ENCODE measurements at regions of chr18 and their contacts with region 1.

Region 1: DNA sequence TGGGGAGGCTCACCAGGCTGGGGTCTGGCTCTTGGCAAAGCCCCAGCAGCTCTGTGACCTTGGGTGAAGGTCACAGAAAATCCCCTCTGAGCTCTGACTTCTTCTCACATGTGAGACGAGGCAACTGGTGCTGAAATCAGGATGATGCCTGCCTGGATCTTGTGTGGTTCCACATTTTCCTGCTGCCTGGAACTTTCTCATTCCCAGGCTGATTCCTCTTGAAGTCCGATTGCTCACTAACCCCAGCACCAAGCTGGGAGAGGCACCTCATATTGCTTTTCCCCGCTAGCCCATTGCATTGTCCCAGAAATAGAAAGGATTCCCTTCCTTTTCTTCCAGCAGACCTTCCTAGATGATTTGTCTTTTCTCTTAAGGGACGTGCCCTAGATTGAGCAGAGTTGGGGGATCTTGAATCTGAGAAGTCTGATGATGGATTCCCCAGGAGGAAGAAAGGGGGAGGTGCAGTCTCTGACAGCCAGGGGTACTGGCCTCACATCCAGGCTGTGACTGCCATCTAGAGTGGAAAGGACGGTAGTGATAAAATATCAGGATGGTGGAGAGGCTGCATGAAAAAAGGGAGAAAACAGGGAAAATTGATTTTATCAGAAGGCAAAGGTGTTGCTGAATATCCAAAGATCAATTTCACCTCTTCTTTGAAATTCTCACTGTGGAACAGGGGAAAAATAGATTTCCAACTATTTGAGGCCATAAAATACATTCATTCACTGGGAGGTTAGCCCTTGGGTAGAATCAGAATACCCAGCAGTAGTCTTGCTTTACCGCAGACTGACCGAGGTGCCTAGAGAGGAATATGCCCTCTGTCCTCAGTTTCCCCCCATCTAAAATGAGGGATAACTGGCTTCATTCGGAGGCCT is 96.3 kb downstream of the FAM210A start:
- DNase-seq: no peak
- ATAC-seq: peak; percentile 95
- H3K4me3 Mint-ChIP-seq: peak overlapping the region; percentile 17
- H3K27ac Mint-ChIP-seq: peak overlapping the region; percentile 63
- H3K4me1 Mint-ChIP-seq: peaks cover 24% of the 10 kb centered on the region
- H3K27me3 Mint-ChIP-seq: no peaks in the 10 kb centered on the region
- CTCF ChIP-seq: peak; percentile 68

Region 2: GRCh38 chr18:13539050-13539449 is 91.0 kb before region 1 on chr18:
- CTCF ChIA-PET with region 1: interaction called, 11 read pairs
- POLR2A ChIA-PET with region 1: no interaction called
- intact Hi-C with region 1: no loop called
- DNase-seq: no peak
- ATAC-seq: peak; percentile 81
- H3K4me3 Mint-ChIP-seq: peak overlapping the region; percentile 75
- H3K27ac Mint-ChIP-seq: peak overlapping the region; percentile 85
- H3K4me1 Mint-ChIP-seq: peaks cover 44% of the 10 kb centered on the region
- H3K27me3 Mint-ChIP-seq: no peaks in the 10 kb centered on the region
- CTCF ChIP-seq: no peak

Region 3: GRCh38 chr18:13577091-13577697 is 52.9 kb before region 1 on chr18:
- CTCF ChIA-PET with region 1: interaction called, 10 read pairs
- POLR2A ChIA-PET with region 1: interaction called, 6 read pairs
- intact Hi-C with region 1: no loop called
- DNase-seq: no peak
- ATAC-seq: peak; percentile 86
- H3K4me3 Mint-ChIP-seq: peak overlapping the region; percentile 68
- H3K27ac Mint-ChIP-seq: peak overlapping the region; percentile 86
- H3K4me1 Mint-ChIP-seq: peaks cover 49% of the 10 kb centered on the region
- H3K27me3 Mint-ChIP-seq: no peaks in the 10 kb centered on the region
- CTCF ChIP-seq: no peak

Region 4: DNA sequence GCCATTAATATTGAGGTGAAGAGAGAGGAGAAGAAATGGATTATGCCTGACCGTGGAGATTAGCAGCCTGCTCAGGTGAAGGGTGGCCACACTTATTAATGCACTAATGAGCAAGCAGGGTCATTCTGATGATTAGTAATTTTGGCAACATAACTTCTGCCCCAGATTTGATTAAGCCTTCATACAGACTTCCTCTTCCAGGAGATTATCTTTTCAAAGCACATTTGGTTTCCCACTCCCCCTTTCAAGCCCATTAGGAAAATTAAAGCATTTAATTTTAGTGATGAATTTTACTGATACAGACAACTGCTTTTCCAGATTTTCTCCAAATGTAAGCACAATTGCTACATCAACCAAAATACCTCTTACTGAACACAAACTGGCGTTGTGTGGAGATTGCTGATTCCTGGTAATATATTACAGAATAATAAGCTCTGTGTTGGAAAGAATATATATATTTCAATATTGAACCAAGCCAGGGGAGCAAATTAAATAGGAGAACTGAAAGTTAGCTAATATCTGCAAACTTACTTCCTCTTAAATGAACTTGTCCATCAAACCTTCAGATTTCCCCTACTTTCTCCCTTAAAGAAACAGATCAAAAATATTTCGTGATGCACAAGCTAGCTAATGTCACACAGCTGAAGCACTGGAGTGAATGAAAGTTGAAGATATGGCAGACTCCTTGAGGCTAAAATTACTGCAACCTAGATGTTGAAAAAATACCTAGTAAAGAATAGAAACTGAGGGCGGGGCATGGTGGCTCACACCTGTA is 44.5 kb before region 1 on chr18:
- CTCF ChIA-PET with region 1: interaction called, 5 read pairs
- POLR2A ChIA-PET with region 1: interaction called, 10 read pairs
- intact Hi-C with region 1: loop called (anchors 1 kb)
- DNase-seq: no peak
- ATAC-seq: peak; percentile 80
- H3K4me3 Mint-ChIP-seq: peak overlapping the region; percentile 76
- H3K27ac Mint-ChIP-seq: peak overlapping the region; percentile 98
- H3K4me1 Mint-ChIP-seq: peaks cover 63% of the 10 kb centered on the region
- H3K27me3 Mint-ChIP-seq: no peaks in the 10 kb centered on the region
- CTCF ChIP-seq: no peak